Activated CD4-positive, alpha-beta T cell treated with anti-CD3 and anti-CD28 coated beads, Interleukin-2, amount 10 ng/mL, durations not matched to agents 24 days and 14 days (primary cell): ENCODE measurements at regions of chr3 and their contacts with region 1.

Region 1: GRCh38 chr3:113745273-113746068 is 578 bp downstream of the NAA50 start:
- DNase-seq: peak; percentile 93
- H3K4me3 Mint-ChIP-seq: peak overlapping the region; percentile 89
- H3K27ac Mint-ChIP-seq: peak overlapping the region; percentile 99
- H3K4me1 Mint-ChIP-seq: peaks cover 62% of the 10 kb centered on the region
- H3K27me3 Mint-ChIP-seq: no peaks in the 10 kb centered on the region

Region 2: DNA sequence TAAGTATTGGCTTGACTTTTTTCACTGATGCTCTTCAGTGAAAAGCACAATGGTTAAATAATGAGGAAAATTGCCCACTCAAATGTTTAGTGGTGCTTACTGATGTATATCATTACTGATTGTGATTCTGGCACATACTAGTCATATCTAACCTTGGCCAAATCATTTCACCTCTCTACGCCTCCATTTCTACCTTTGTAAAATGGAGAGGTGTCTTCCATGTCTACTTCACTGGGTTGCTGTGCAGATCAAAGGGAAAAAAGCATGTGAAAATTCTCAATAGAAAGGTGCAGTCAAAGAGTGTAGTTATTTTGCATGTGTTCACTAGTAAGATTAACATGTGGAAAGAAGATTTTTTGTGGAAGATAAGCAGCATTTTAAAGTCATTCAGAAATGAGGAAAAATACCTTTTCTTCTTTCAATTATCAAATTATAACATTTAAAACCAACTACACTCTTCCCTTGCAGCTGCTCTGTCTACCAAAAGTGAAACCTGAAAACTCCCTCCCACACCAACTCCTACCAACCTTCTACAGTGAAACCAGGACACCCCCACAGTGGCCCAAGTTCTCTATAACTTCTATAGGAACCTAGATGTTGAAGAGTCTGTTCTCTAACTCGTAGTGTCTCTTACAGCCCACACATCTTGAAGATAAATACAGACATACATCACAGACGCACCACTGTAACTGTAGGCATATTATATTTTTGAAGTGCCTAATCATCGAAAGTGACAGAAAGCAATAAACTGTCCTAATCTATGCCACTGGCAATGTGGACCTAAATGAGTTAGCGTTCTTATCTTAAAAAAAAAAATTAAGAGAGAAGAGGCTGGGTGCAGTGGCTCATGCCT is 771.9 kb before region 1 on chr3:
- intact Hi-C with region 1: loop called (anchors 5 kb)
- DNase-seq: peak; percentile 86
- H3K4me3 Mint-ChIP-seq: peak overlapping the region; percentile 85
- H3K27ac Mint-ChIP-seq: peak overlapping the region; percentile 93
- H3K4me1 Mint-ChIP-seq: peaks cover 67% of the 10 kb centered on the region
- H3K27me3 Mint-ChIP-seq: no peaks in the 10 kb centered on the region

Region 3: DNA sequence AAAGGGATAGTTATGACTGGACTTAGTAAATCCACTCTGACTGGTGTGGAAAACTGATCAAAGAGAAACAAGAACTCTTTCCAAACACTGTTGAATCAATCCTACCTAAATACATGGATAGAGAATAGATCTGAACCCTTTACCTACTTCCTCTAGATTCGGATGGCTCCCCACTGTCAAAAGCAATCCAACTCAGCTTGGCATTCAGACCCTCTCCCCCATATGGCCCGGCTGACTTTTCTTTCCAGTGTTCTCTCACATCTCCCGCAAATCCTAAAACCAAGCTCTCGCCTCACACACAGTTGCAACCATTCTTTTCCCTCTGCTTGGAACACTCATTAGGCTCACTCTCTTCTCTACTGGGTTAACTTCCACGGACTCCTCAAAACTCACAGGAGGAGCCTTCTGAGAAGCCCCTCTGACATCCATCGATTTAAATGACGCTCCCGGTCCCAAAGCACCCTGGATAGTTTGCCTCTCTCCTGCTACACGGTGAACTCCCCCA is 231.2 kb before region 1 on chr3:
- intact Hi-C with region 1: loop called (anchors 1 kb)
- DNase-seq: no peak
- H3K4me3 Mint-ChIP-seq: no peak overlapping the region
- H3K27ac Mint-ChIP-seq: no peak overlapping the region
- H3K4me1 Mint-ChIP-seq: peaks cover 13% of the 10 kb centered on the region
- H3K27me3 Mint-ChIP-seq: peaks cover 26% of the 10 kb centered on the region

Region 4: GRCh38 chr3:113712129-113712528 is 33.3 kb before region 1 on chr3:
- intact Hi-C with region 1: no loop called
- DNase-seq: no peak
- H3K4me3 Mint-ChIP-seq: no peak overlapping the region
- H3K27ac Mint-ChIP-seq: no peak overlapping the region
- H3K4me1 Mint-ChIP-seq: peaks cover 7% of the 10 kb centered on the region
- H3K27me3 Mint-ChIP-seq: peaks cover 23% of the 10 kb centered on the region

Region 5: DNA sequence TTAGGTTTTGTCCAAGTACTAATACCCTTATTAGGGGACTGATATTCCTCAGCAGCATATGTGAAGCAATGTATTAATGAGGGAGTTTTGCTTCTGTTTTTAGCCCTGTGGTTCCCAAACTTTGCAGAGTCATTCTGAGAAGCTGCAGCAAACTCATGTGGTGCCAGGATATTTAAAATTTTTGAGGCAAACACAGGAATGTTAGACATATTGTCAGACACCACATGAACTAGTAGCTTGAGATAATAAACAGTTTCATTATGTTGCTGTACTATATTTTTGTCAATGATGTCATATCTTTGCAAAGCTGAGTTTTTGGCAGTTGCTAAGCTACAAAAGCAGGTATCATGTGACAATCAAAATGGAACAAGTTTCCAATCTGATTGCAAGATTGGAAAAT is 38.0 kb after region 1 on chr3:
- intact Hi-C with region 1: loop called (anchors 5 kb)
- DNase-seq: no peak
- H3K4me3 Mint-ChIP-seq: no peak overlapping the region
- H3K27ac Mint-ChIP-seq: no peak overlapping the region
- H3K4me1 Mint-ChIP-seq: peaks cover 7% of the 10 kb centered on the region
- H3K27me3 Mint-ChIP-seq: no peaks in the 10 kb centered on the region

Region 6: GRCh38 chr3:113819866-113820265 is 74.4 kb after region 1 on chr3:
- intact Hi-C with region 1: no loop called
- DNase-seq: no peak
- H3K4me3 Mint-ChIP-seq: no peak overlapping the region
- H3K27ac Mint-ChIP-seq: no peak overlapping the region
- H3K4me1 Mint-ChIP-seq: no peaks in the 10 kb centered on the region
- H3K27me3 Mint-ChIP-seq: no peaks in the 10 kb centered on the region

Region 7: GRCh38 chr3:114213627-114214541 is 468.4 kb after region 1 on chr3:
- intact Hi-C with region 1: loop called (anchors 5 kb)
- DNase-seq: peak; percentile 89
- H3K4me3 Mint-ChIP-seq: no peak overlapping the region
- H3K27ac Mint-ChIP-seq: no peak overlapping the region
- H3K4me1 Mint-ChIP-seq: peaks cover 23% of the 10 kb centered on the region
- H3K27me3 Mint-ChIP-seq: no peaks in the 10 kb centered on the region